ENCODE measurements at regions of chr5 and their contacts with region 1.

Region 1: DNA sequence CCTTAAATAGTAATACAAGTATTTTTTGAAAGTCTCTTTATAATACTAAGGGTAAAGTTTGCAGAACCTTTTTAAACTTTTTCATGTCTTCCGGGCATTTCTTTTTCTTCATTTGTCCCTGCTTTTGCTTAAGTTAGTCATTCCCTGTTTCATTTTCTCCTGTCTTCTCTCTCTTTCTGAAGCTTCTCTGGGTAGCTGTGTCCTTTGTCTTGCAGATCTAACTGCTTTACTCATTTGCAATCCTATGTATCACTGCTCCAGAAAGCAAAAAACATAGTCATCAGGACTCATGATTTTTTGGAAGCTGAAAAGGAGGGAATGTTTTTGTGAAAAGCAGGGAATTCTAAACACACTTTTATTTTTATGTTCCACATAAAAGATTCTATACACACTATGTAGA is 301.7 kb downstream of the MRPS30 start:
- DNase-seq: no peak
- ATAC-seq: peak; percentile 84
- H3K4me3 Mint-ChIP-seq: peak overlapping the region; percentile 32
- H3K27ac Mint-ChIP-seq: peak overlapping the region; percentile 88
- H3K4me1 Mint-ChIP-seq: peaks cover 57% of the 10 kb centered on the region
- H3K27me3 Mint-ChIP-seq: no peaks in the 10 kb centered on the region
- CTCF ChIP-seq: no peak

Region 2: GRCh38 chr5:44875661-44876605 is 234.5 kb before region 1 on chr5:
- CTCF ChIA-PET with region 1: no interaction called
- POLR2A ChIA-PET with region 1: no interaction called
- DNase-seq: no peak
- ATAC-seq: no peak
- H3K4me3 Mint-ChIP-seq: no peak overlapping the region
- H3K27ac Mint-ChIP-seq: peak overlapping the region; percentile 52; the same call in 1 of the 2 replicates
- H3K4me1 Mint-ChIP-seq: peaks cover 7% of the 10 kb centered on the region
- H3K27me3 Mint-ChIP-seq: no peaks in the 10 kb centered on the region
- CTCF ChIP-seq: no peak

Region 3: DNA sequence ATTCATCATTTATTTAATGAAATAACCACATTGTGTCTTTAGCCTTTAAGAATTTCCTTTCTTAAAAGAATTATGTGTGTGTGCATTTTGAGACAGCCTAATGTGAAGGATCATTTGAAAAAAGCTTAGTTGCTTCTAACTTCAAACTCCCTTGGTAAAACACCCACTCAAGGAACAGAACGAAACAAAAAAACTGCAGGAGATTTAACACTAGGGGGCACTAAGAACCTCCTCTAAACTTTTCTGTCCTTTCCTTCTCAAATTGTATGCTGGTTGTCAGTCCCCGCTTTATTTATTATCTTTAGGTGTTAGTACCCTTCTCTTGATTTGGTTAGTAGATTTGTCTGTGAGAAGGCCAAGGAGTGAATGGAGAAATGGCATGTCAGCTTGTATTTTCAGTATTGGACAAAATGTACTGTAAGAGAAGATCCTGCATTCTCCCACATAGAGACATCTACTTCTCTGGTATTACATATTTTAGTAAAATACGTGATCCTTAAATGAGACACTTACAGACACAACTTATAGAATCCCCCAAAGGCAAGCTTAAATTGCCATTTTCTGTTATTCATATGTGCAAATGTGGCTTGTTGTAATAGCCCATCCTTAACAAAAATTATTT is 71.9 kb before region 1 on chr5:
- CTCF ChIA-PET with region 1: interaction called, 11 read pairs
- POLR2A ChIA-PET with region 1: no interaction called
- DNase-seq: no peak
- ATAC-seq: peak; percentile 81
- H3K4me3 Mint-ChIP-seq: no peak overlapping the region
- H3K27ac Mint-ChIP-seq: no peak overlapping the region
- H3K4me1 Mint-ChIP-seq: peaks cover 10% of the 10 kb centered on the region
- H3K27me3 Mint-ChIP-seq: no peaks in the 10 kb centered on the region
- CTCF ChIP-seq: peak; percentile 61

Region 4: DNA sequence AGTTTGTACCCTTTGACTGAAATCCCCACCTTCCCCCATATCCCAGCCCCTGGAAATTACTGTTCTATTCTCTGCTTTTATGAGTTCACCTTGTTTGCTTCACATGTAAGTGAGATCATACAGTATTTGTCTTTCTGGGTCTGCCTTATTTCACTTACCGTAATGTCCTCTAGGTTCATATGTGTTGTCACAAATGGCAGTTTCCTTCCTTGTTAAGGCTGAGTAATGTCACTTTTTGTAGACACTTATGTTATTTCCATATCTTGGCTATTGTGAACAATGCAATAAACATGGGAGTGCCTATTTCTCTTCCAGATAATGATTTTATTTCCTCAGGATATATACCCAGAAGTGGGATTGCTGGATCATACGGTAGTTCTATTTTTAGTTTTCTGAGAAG is 29.3 kb before region 1 on chr5:
- CTCF ChIA-PET with region 1: no interaction called
- POLR2A ChIA-PET with region 1: no interaction called
- DNase-seq: no peak
- ATAC-seq: no peak
- H3K4me3 Mint-ChIP-seq: no peak overlapping the region
- H3K27ac Mint-ChIP-seq: no peak overlapping the region
- H3K4me1 Mint-ChIP-seq: peaks cover 4% of the 10 kb centered on the region; the same call in 1 of the 2 replicates
- H3K27me3 Mint-ChIP-seq: no peaks in the 10 kb centered on the region
- CTCF ChIP-seq: no peak